ENCODE measurements at regions of chr15 and their contacts with region 1.

Region 1: GRCh38 chr15:68210821-68211655 is 5.9 kb upstream of the CALML4 start:
- DNase-seq: no peak
- H3K4me3 ChIP-seq: no peak overlapping the region
- H3K27ac ChIP-seq: no peak overlapping the region
- H3K4me1 ChIP-seq: peaks cover 12% of the 10 kb centered on the region
- H3K27me3 ChIP-seq: no peaks in the 10 kb centered on the region
- CTCF ChIP-seq: peak; percentile 65 to 84

Region 2: GRCh38 chr15:67863442-67863987 is 347.5 kb before region 1 on chr15:
- CTCF ChIA-PET with region 1: no interaction called
- dilution Hi-C with region 1: no loop called
- in situ Hi-C with region 1: no loop called
- intact Hi-C with region 1: loop called (anchors 1 kb)
- DNase-seq: peak; percentile 56
- H3K4me3 ChIP-seq: peak overlapping the region; percentile 35 to 49 (median 47)
- H3K27ac ChIP-seq: no peak overlapping the region
- H3K4me1 ChIP-seq: peaks cover 9% of the 10 kb centered on the region
- H3K27me3 ChIP-seq: no peaks in the 10 kb centered on the region
- CTCF ChIP-seq: peak; percentile 68 to 96

Measured in mammary epithelial cell (primary cell).